ENCODE measurements at regions of chr12 and their contacts with region 1.

Region 1: DNA sequence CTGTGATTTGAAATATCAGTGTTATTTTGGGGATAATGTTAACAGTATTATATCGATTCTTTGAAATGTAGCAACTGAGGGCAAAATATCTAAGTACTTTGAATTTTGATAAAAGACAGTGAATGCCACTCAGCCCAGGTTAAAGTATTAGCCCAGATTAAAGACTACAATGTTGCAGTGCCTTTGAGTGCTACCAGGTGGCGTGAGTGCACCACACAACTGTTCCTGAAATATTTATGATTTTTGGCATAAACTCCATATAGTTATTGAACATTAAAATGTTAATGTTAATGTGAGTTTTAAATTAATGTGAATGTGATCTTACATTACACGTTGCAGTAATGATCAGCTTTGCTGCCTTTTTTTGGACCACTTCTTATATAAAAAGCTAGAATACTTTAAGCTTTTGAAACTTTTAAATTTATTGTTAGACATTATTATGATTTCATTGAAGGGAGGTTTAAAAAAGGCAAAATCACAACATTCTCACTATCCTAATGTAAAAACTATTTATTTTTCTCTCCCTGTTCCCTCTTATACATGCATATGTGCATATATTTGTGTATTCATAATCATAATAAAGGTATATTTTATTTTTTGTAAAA is 22.5 kb downstream of the MRPS35 start:
- DNase-seq: no peak
- ATAC-seq: peak; percentile 56

Region 2: GRCh38 chr12:27682534-27682933 is 50.6 kb before region 1 on chr12:
- intact Hi-C with region 1: no loop called
- DNase-seq: no peak
- ATAC-seq: no peak

Region 3: GRCh38 chr12:27821259-27821973 is 88.3 kb after region 1 on chr12:
- intact Hi-C with region 1: loop called (anchors 5 kb)
- DNase-seq: no peak
- ATAC-seq: peak; percentile 67

Region 4: DNA sequence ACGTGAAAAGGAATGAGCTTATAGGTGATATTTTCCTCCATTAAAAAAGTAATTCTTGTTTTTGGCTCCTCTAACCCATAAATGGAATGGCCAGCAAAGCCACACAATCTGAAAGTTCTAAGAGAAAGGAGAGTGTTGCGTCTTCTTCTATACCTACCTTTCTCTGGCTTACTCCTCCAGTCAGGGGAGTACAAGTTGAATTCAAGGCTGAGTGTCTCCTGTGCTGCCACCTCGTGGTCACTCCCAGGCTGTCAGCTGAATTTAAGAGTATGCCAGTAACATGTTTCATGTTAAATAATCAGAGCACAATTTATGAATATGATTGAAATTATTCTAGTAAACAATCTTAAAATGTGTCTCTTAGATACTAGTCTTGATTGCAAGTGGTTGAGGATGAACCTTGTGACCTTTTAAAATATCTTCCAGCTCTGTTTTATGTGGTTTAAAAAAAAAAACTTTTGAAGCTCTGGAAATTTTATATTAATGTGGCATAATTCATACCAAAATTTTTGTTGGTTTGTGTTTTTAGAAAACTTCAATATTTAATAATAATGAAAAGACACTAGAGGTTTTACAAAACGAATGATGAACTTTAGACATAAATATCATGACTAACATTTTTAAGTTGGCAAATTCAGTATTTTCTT is 207.7 kb after region 1 on chr12:
- intact Hi-C with region 1: loop called (anchors 5 kb)
- DNase-seq: peak; percentile 81
- ATAC-seq: peak; percentile 77